K562 (cell line): ENCODE measurements at regions of chr1 and their contacts with region 1.

Region 1: DNA sequence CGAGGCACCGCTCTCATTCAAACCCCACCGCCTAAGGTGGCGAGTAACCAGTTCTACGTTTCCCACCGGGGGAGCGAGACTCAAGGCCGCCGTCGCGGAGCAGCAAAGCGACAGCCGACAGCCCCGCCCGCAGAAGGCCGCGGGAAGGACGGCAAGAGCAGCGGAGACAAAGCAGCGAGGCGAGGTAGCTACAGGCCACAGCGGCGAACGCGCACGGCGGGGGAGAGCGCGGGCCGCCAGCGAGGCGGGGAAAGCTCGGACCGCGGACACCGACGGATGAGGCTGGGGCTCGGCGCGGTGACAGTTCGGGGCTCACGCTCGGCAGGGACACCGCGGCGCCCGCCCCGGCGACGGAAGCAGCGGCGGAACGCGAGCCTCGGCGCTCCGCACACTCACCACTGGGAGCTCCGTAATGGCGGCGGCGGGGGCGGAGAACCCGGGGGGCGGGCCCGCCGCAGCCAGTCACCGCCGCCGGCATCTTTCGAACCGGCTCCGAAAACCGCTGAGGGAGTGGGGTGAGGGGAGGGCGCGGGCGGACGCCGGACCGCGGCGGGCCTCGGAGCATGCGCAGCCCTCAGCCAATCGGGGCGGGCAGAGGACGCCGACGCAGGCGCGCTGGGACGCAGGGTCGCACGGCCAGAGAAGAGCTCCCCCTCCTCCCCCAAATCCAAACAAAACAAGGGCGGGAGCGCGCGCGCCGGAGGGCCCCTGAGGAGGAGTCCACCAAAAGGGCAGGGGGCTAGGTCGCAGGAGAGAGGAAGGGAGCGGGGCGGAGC is 666 bp downstream of the HP1BP3 start:
- DNase-seq: peak; percentile 95 to 98 (median 98)
- ATAC-seq: peak; percentile 90
- H3K4me3 ChIP-seq: peak overlapping the region; percentile 99
- H3K27ac ChIP-seq: peak overlapping the region; percentile 99
- H3K4me1 ChIP-seq: peaks cover 18 to 26% of the 10 kb centered on the region in 2 experiments
- H3K27me3 ChIP-seq: no peaks in the 10 kb centered on the region
- CTCF ChIP-seq: peak in 1 of 3 experiments; percentile 17; a peak in 2 of 6 replicates
- EP300 ChIP-seq: no peak
- POLR2A ChIP-seq: peak; percentile 90
- RAD21 ChIP-seq: no peak

Region 2: GRCh38 chr1:20739225-20739624 is 47.2 kb before region 1 on chr1:
- CTCF ChIA-PET with region 1: no interaction called
- POLR2A ChIA-PET with region 1: interaction called, 11 read pairs
- in situ Hi-C with region 1: no loop called
- intact Hi-C with region 1: no loop called
- DNase-seq: no peak
- ATAC-seq: no peak
- H3K4me3 ChIP-seq: no peak overlapping the region
- H3K27ac ChIP-seq: no peak overlapping the region
- H3K4me1 ChIP-seq: no peaks in the 10 kb centered on the region
- H3K27me3 ChIP-seq: no peaks in the 10 kb centered on the region
- CTCF ChIP-seq: no peak
- EP300 ChIP-seq: no peak
- POLR2A ChIP-seq: no peak
- RAD21 ChIP-seq: no peak

Region 3: DNA sequence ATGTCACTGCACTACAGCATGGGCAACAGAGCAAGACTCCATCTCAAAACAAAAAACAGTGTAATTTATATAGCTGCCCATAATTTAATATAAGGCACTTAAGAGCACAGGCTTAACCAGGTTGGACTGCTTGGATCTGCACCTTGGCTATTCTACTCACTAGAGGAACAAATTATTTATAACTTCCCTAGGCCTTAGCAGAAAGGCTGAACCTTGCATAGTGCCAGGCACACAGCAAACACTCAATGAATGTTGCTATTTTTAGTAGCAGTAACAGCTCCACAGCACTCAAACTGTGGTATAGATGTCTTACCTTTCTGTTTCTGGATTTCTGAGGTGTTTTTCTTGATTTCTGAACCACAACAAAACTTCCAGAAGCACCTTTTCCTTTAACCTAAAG is 19.2 kb before region 1 on chr1:
- CTCF ChIA-PET with region 1: no interaction called
- POLR2A ChIA-PET with region 1: interaction called, 79 read pairs
- in situ Hi-C with region 1: no loop called
- intact Hi-C with region 1: no loop called
- DNase-seq: no peak
- ATAC-seq: no peak
- H3K4me3 ChIP-seq: no peak overlapping the region
- H3K27ac ChIP-seq: no peak overlapping the region
- H3K4me1 ChIP-seq: no peaks in the 10 kb centered on the region
- H3K27me3 ChIP-seq: no peaks in the 10 kb centered on the region
- CTCF ChIP-seq: no peak
- EP300 ChIP-seq: no peak
- POLR2A ChIP-seq: no peak
- RAD21 ChIP-seq: no peak

Region 4: GRCh38 chr1:20775700-20776099 is 10.7 kb before region 1 on chr1:
- CTCF ChIA-PET with region 1: no interaction called
- POLR2A ChIA-PET with region 1: interaction called, 79 read pairs
- in situ Hi-C with region 1: no loop called
- intact Hi-C with region 1: no loop called
- DNase-seq: no peak
- ATAC-seq: no peak
- H3K4me3 ChIP-seq: no peak overlapping the region
- H3K27ac ChIP-seq: no peak overlapping the region
- H3K4me1 ChIP-seq: no peaks in the 10 kb centered on the region
- H3K27me3 ChIP-seq: no peaks in the 10 kb centered on the region
- CTCF ChIP-seq: no peak
- EP300 ChIP-seq: no peak
- POLR2A ChIP-seq: no peak
- RAD21 ChIP-seq: no peak

Region 5: DNA sequence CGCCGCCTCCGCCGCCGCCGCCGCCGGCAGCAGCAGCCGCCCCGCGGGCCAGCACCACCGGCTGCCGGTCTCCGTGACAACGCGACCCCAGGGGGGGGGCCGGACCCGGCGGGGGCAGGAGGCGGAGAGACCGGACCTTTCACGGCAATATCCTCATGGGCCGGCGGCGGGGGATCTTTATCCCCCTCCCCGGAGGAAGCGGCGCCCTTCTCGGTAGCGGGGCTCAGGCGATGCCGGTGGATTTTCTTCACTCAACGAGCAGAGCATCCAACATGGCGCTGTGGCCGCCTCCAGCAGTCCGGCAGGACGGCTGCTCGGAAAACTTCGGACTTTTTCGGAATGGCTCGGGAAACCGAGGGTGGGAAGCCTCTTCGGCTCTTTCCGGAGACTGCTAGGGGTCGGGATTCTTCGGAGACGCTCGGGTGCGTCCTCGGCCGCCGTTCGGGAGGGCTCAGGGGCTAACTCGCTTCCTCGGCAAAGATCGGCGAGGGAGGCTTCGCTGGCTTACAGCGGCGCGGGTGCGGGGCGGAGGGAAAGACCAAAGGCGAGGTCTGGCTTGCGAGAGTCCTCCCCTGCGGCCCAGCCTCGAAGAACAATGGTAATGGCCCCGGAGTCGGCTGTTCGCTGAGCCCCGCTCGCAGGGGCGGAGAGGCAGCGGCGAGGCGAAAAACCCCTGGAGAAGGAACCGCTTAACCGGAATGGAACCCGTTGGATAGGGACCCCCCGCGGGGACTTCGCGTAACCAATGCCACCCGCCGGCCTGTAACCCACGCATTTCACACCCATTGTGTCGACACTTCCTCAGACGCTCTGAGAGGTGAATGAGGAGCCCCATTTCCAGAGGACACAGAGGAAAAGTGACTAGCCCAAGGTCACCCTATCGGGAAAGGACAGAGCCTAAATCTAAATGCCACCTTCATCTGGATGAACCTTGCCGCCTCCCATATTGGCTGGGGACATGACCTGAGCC is 390.4 kb after region 1 on chr1 and contains the start of gene EIF4G3:
- CTCF ChIA-PET with region 1: no interaction called
- POLR2A ChIA-PET with region 1: interaction called, 3 read pairs
- in situ Hi-C with region 1: no loop called
- intact Hi-C with region 1: loop called (anchors 5 kb)
- DNase-seq: peak; percentile 95 to 99 (median 98)
- ATAC-seq: peak; percentile 99
- H3K4me3 ChIP-seq: peak within 1 kb of the TSS; percentile 88
- H3K27ac ChIP-seq: peak within 1 kb of the TSS; percentile 83
- H3K4me1 ChIP-seq: peaks cover 16 to 20% of the 10 kb centered on the region in 2 experiments; a peak in 4 of 5 replicates
- H3K27me3 ChIP-seq: no peaks in the 10 kb centered on the region
- CTCF ChIP-seq: no peak
- EP300 ChIP-seq: no peak
- POLR2A ChIP-seq: peak; percentile 90
- RAD21 ChIP-seq: no peak
- polyA plus RNA-seq, gene EIF4G3: 6.7 to 10.1 TPM